HepG2 (cell line): ENCODE measurements at regions of chr5 and their contacts with region 1.

Region 1: DNA sequence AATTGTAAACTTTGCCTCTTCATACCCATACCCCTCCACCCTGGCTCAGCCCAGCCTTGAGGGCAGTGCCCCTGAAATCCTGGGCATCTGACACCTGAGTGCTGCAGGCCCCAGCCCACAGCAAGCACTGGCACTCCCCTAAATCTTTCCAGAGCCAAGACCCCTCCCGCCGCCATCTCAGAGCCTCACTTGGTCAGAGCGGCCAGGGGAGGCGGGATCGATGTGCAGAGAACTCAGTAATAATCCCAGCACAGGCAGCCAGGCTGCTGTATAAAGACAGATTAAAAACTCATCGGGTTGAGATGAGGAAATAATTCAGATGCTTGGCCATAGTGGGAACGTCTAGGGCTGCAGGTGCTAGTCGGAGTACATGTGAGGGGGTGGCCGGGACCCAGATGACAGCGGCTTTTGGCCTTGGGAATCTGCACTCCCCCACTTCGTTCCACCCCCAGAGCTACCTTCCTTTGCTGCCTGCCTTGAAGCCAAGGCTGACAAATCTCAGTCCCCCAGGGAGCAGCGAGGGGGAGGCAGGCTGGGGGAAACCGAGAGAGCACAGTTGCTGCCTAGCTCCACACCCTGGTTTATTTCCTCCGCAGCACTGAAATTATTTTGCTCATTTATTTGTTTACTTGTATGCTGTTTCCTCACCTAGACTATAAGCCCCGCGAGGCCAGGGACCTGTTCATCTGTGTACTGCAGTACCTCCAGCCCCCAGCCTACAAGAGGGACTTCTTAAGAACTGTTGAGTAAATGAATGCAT is 19.5 kb upstream of the ARAP3 start:
- DNase-seq: no peak
- ATAC-seq: peak; percentile 12; the same call in 2 of the 3 replicates
- H3K4me3 ChIP-seq: no peak overlapping the region
- H3K27ac ChIP-seq: no peak overlapping the region
- H3K4me1 ChIP-seq: peaks cover 16% of the 10 kb centered on the region; the same call in 1 of the 2 replicates
- H3K27me3 ChIP-seq: peaks cover 12 to 52% of the 10 kb centered on the region in 2 experiments
- CTCF ChIP-seq: no peak
- EP300 ChIP-seq: no peak
- POLR2A ChIP-seq: no peak
- RAD21 ChIP-seq: no peak

Region 2: GRCh38 chr5:141811287-141812155 is 110.0 kb after region 1 on chr5:
- CTCF ChIA-PET with region 1: interaction called, 4 read pairs
- POLR2A ChIA-PET with region 1: no interaction called
- in situ Hi-C with region 1: loop called (anchors 10 kb)
- intact Hi-C with region 1: loop called (anchors 1 kb)
- DNase-seq: peak; percentile 9
- ATAC-seq: peak; percentile 74
- H3K4me3 ChIP-seq: no peak overlapping the region
- H3K27ac ChIP-seq: no peak overlapping the region
- H3K4me1 ChIP-seq: no peaks in the 10 kb centered on the region
- H3K27me3 ChIP-seq: peaks cover 2 to 40% of the 10 kb centered on the region in 2 experiments; a peak in 3 of 5 replicates
- CTCF ChIP-seq: peak; percentile 48
- EP300 ChIP-seq: no peak
- POLR2A ChIP-seq: no peak
- RAD21 ChIP-seq: no peak